WTC11 (cell line): ENCODE measurements at regions of chr12 and their contacts with region 1.

Region 1: GRCh38 chr12:1117970-1118563 is 127.0 kb downstream of the ERC1 start:
- DNase-seq: peak; percentile 66
- ATAC-seq: peak; percentile 32; the same call in 1 of the 2 replicates
- H3K4me3 Mint-ChIP-seq: no peak overlapping the region
- H3K27ac Mint-ChIP-seq: no peak overlapping the region
- H3K4me1 Mint-ChIP-seq: no peaks in the 10 kb centered on the region
- H3K27me3 Mint-ChIP-seq: peaks cover 40% of the 10 kb centered on the region
- CTCF ChIP-seq: peak; percentile 91

Region 2: GRCh38 chr12:913919-914708 is 204.0 kb before region 1 on chr12:
- CTCF ChIA-PET with region 1: no interaction called
- POLR2A ChIA-PET with region 1: no interaction called
- DNase-seq: no peak
- ATAC-seq: peak; percentile 15; the same call in 1 of the 2 replicates
- H3K4me3 Mint-ChIP-seq: no peak overlapping the region
- H3K27ac Mint-ChIP-seq: peak overlapping the region; percentile 85
- H3K4me1 Mint-ChIP-seq: peaks cover 37% of the 10 kb centered on the region
- H3K27me3 Mint-ChIP-seq: no peaks in the 10 kb centered on the region
- CTCF ChIP-seq: no peak

Region 3: GRCh38 chr12:1047898-1048660 is 70.0 kb before region 1 on chr12:
- CTCF ChIA-PET with region 1: no interaction called
- POLR2A ChIA-PET with region 1: no interaction called
- DNase-seq: no peak
- ATAC-seq: peak; percentile 77
- H3K4me3 Mint-ChIP-seq: no peak overlapping the region
- H3K27ac Mint-ChIP-seq: peak overlapping the region; percentile 71
- H3K4me1 Mint-ChIP-seq: peaks cover 54% of the 10 kb centered on the region
- H3K27me3 Mint-ChIP-seq: no peaks in the 10 kb centered on the region
- CTCF ChIP-seq: no peak

Region 4: GRCh38 chr12:1171657-1172408 is 53.8 kb after region 1 on chr12:
- CTCF ChIA-PET with region 1: interaction called, 13 read pairs
- POLR2A ChIA-PET with region 1: no interaction called
- DNase-seq: no peak
- ATAC-seq: peak; percentile 24; the same call in 1 of the 2 replicates
- H3K4me3 Mint-ChIP-seq: no peak overlapping the region
- H3K27ac Mint-ChIP-seq: no peak overlapping the region; the same call in 1 of the 2 replicates
- H3K4me1 Mint-ChIP-seq: peaks cover 9% of the 10 kb centered on the region
- H3K27me3 Mint-ChIP-seq: no peaks in the 10 kb centered on the region
- CTCF ChIP-seq: no peak

Region 5: DNA sequence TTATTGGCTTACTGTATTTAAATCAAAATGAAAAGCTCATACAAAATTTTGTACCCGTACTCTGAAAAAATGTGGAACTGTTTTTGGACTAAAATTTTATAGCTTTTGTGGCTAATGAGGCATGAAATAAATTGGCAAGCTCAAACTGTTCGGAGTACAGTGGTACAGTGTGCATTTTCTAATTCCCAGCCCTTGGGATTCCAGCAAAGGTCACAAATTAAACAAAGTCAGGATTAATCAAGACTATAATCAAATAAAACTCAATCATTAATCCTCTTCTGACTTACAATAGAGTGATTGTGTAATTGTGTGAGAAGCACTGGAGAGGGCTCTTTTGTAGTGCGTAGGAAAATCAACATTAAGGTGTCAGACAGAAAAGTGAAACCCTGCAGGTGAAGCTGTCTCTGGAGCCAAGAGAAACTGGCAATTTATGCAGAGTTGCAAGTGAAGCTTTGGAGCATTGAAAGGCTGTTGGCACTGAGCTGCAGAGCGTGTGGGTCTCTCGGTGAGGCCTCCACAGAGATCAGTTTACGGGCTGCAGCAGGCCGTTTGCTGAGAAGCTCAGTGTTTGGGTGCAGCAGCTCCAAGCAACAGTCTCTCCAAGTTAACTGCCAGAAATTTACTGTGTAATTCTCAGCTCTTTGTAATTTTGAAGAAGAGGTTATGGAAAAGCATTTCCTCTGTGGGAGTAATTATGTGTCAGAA is 200.4 kb after region 1 on chr12:
- CTCF ChIA-PET with region 1: interaction called, 13 read pairs
- POLR2A ChIA-PET with region 1: no interaction called
- DNase-seq: peak; percentile 19
- ATAC-seq: peak; percentile 91
- H3K4me3 Mint-ChIP-seq: no peak overlapping the region
- H3K27ac Mint-ChIP-seq: peak overlapping the region; percentile 91
- H3K4me1 Mint-ChIP-seq: peaks cover 11% of the 10 kb centered on the region
- H3K27me3 Mint-ChIP-seq: no peaks in the 10 kb centered on the region
- CTCF ChIP-seq: no peak

Region 6: GRCh38 chr12:1435456-1435855 is 317.4 kb after region 1 on chr12:
- CTCF ChIA-PET with region 1: interaction called, 12 read pairs
- POLR2A ChIA-PET with region 1: no interaction called
- DNase-seq: no peak
- ATAC-seq: no peak
- H3K4me3 Mint-ChIP-seq: no peak overlapping the region
- H3K27ac Mint-ChIP-seq: no peak overlapping the region
- H3K4me1 Mint-ChIP-seq: no peaks in the 10 kb centered on the region
- H3K27me3 Mint-ChIP-seq: no peaks in the 10 kb centered on the region
- CTCF ChIP-seq: no peak

Region 7: GRCh38 chr12:1559676-1560091 is 441.6 kb after region 1 on chr12:
- CTCF ChIA-PET with region 1: interaction called, 10 read pairs
- POLR2A ChIA-PET with region 1: no interaction called
- DNase-seq: no peak
- ATAC-seq: peak; percentile 47
- H3K4me3 Mint-ChIP-seq: no peak overlapping the region
- H3K27ac Mint-ChIP-seq: peak overlapping the region; percentile 4; the same call in 1 of the 2 replicates
- H3K4me1 Mint-ChIP-seq: peaks cover 11% of the 10 kb centered on the region
- H3K27me3 Mint-ChIP-seq: no peaks in the 10 kb centered on the region
- CTCF ChIP-seq: no peak

Region 8: GRCh38 chr12:1583421-1584078 is 465.5 kb after region 1 on chr12:
- CTCF ChIA-PET with region 1: interaction called, 61 read pairs
- POLR2A ChIA-PET with region 1: no interaction called
- DNase-seq: peak; percentile 70
- ATAC-seq: peak; percentile 65
- H3K4me3 Mint-ChIP-seq: no peak overlapping the region
- H3K27ac Mint-ChIP-seq: no peak overlapping the region
- H3K4me1 Mint-ChIP-seq: peaks cover 24% of the 10 kb centered on the region
- H3K27me3 Mint-ChIP-seq: peaks cover 56% of the 10 kb centered on the region
- CTCF ChIP-seq: peak; percentile 73